Esophagus squamous epithelium (tissue), 5 donors: ENCODE measurements at regions of chrX and their contacts with region 1.

Region 1: GRCh38 chrX:115330498-115331168 is 41.1 kb downstream of the LUZP4 start:
- DNase-seq: no peak
- H3K4me3 ChIP-seq: peak overlapping the region in 1 of 4 donors; percentile 48
- H3K27ac ChIP-seq: no peak overlapping the region
- H3K4me1 ChIP-seq: no peaks in the 10 kb centered on the region
- H3K27me3 ChIP-seq: no peaks in the 10 kb centered on the region
- CTCF ChIP-seq: peak; percentile 73 to 88 (median 78)
- POLR2A ChIP-seq: no peak

Region 2: DNA sequence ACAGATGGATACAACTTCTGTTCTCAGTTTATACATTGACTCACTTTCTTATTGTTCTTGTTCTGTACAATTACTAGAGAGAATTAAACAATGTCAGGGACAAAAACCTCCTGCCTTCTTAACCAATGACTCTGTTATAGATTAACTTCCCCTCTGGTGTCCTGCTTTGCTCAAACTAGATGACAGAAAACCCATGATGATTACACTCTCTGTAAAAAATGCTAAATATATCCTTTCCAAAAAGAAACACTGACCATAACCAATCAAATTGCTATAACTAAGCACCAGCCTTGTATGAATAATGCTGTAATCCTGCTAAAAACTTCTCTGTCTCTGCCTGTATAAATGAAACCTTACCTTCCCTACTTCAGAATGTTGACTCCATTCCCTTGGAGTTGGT is 283.5 kb before region 1 on chrX:
- intact Hi-C with region 1: no loop called
- DNase-seq: no peak
- H3K4me3 ChIP-seq: no peak overlapping the region
- H3K27ac ChIP-seq: no peak overlapping the region
- H3K4me1 ChIP-seq: no peaks in the 10 kb centered on the region
- H3K27me3 ChIP-seq: no peaks in the 10 kb centered on the region
- CTCF ChIP-seq: no peak
- POLR2A ChIP-seq: no peak

Region 3: GRCh38 chrX:115642895-115643530 is 312.4 kb after region 1 on chrX:
- intact Hi-C with region 1: loop called (anchors 10 kb)
- DNase-seq: no peak
- H3K4me3 ChIP-seq: no peak overlapping the region
- H3K27ac ChIP-seq: peak overlapping the region in 2 of 4 donors; percentile 33 to 56
- H3K4me1 ChIP-seq: peaks cover 0 to 6% (median 0%) of the 10 kb centered on the region in 3 donors
- H3K27me3 ChIP-seq: peaks cover 0 to 3% (median 0%) of the 10 kb centered on the region in 4 donors
- CTCF ChIP-seq: peak; percentile 79 to 100 (median 87)
- POLR2A ChIP-seq: no peak